Upper lobe of right lung (tissue), 1 donor: ENCODE measurements at regions of chr4 and their contacts with region 1.

Region 1: DNA sequence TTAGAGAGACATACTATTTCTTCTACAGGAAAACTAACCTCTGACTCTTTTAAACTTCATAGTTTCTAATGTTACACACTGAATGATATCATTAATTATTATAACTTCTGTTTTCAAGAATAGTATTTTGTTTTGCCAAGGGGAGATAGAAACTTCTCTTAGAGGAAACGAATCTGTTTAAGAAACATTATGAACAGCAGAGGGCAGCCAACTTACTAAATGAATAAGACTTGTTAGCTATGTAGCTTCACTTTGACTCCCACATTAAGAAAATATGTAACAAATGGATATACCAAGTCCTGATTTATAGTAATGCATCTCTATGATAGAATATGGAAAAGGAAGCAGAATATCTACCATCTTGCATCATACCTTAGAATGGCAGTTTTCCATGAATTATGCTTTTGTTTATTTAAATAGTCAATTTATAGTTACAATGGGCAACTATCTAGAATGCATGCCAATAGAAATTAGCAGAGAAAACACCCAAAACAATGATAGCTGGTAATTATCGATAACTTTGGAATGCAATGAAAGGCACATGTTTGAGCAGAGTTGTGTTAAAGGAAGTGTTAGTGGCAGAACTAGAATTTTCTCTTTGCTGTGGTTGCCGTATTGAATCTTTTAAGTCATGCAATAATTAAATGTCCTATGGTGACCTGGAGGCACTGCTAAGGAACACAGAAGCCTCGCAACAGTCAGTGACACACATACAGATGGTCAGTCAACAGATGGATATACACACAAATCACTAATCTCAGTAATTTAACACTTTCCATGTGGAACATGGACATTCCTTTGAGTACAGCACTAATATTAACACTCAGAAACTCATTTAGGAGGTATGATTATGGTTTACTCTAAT is 105.7 kb upstream of the PDLIM3 start:
- DNase-seq: no peak
- ATAC-seq: peak; percentile 33
- H3K4me3 ChIP-seq: no peak overlapping the region
- H3K27ac ChIP-seq: no peak overlapping the region
- H3K4me1 ChIP-seq: no peaks in the 10 kb centered on the region
- H3K27me3 ChIP-seq: no peaks in the 10 kb centered on the region
- CTCF ChIP-seq: peak; percentile 54

Region 2: DNA sequence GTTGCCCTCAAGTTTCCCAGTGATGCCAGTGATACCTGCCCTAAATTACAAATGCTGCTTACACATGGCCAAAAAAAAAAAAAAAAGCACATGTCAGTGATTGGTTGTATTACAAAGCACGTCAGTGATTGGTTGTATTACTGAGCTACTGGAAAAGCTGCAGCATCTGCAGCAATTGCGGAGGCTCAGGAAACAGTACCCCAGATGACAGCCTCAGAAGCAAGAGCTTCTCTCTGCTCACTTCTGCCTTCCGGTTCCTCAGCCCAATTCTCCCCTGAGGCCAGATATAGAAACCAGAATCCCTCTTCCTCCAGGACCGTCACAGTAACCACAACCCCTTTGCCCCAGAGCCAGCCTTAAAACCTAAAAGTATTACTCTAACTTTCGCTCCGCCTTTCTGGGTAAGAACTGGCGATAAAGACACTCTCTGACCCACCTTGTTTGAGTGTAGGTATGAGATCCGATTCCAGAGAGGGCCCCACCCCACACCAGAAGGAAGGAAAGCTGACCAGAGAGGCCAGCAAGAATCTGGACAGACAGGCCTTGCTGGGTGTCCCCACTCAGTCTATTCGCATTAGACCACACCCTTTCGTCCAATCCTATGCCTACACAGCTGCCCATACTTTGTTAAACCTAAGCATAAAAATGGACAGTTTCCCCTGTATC is 255.9 kb after region 1 on chr4:
- intact Hi-C with region 1: no loop called
- DNase-seq: no peak
- ATAC-seq: peak; percentile 76
- H3K4me3 ChIP-seq: no peak overlapping the region
- H3K27ac ChIP-seq: no peak overlapping the region
- H3K4me1 ChIP-seq: no peaks in the 10 kb centered on the region
- H3K27me3 ChIP-seq: no peaks in the 10 kb centered on the region
- CTCF ChIP-seq: no peak

Region 3: GRCh38 chr4:186021461-186022167 is 380.6 kb after region 1 on chr4:
- intact Hi-C with region 1: loop called (anchors 10 kb)
- DNase-seq: no peak
- ATAC-seq: peak; percentile 68
- H3K4me3 ChIP-seq: peak overlapping the region; percentile 15
- H3K27ac ChIP-seq: no peak overlapping the region
- H3K4me1 ChIP-seq: peaks cover 4% of the 10 kb centered on the region
- H3K27me3 ChIP-seq: no peaks in the 10 kb centered on the region
- CTCF ChIP-seq: peak; percentile 77